ENCODE measurements at regions of chr5 and their contacts with region 1.

Region 1: DNA sequence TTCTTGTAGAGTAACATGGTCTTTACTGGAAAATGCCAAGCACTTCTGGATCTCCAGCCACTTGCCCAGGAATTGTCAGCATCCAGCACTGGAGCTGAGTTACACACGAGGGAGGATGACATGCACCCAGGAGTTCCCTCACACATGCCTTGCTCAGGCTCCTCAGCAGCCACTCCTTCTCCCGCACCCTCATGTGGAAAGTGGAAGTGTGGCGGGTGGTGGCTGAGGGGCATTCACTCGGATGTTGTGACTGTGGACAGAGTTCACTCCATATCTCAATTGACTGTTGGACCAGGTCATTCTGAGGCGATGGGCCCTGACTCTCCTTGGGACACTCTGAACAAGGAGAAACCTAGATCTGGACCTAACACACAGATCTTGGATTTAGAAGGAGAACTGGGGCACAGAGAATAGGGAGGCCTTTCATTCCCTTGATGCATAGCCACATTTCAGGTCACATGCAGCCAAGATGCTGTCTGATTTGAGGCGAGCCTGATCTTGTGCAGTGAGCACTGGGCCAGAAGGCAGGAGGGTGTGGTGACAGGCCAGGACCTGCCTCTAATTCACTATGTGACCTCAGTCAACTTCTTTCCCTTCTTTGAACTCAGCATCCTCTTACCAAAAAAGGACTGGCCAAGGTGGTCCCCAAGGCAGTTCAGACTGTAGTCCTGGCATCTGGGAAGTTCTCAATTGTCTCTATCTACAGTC is 62.1 kb downstream of the CYSTM1 start:
- DNase-seq: no peak
- H3K4me3 ChIP-seq: no peak overlapping the region
- H3K27ac ChIP-seq: no peak overlapping the region
- H3K4me1 ChIP-seq: peaks cover 19% of the 10 kb centered on the region
- H3K27me3 ChIP-seq: no peaks in the 10 kb centered on the region
- CTCF ChIP-seq: no peak

Region 2: DNA sequence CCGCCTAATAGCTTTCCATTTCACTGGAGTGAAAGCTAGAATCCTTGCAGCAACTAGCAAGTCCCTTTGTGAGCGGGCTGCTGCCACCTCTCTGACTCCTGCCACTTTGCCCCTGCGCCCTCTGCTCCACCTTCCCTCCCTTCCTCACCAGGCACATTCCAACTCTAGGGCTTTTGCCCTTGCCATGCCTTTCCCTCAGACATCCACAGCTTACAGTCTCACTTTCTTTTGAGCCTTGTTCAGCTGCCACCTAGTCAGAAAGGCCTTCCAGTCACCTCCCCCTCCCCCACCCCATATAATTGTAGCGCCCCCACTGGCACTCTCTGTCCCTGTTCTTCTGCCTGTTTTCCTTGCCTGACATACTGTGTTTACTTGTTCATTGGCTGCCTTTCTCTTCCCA is 31.1 kb before region 1 on chr5:
- CTCF ChIA-PET with region 1: interaction called, 10 read pairs
- POLR2A ChIA-PET with region 1: no interaction called
- intact Hi-C with region 1: no loop called
- DNase-seq: no peak
- H3K4me3 ChIP-seq: no peak overlapping the region
- H3K27ac ChIP-seq: no peak overlapping the region
- H3K4me1 ChIP-seq: peaks cover 7% of the 10 kb centered on the region
- H3K27me3 ChIP-seq: no peaks in the 10 kb centered on the region
- CTCF ChIP-seq: no peak

Region 3: GRCh38 chr5:140251527-140251973 is 14.5 kb after region 1 on chr5:
- CTCF ChIA-PET with region 1: no interaction called
- POLR2A ChIA-PET with region 1: no interaction called
- intact Hi-C with region 1: no loop called
- DNase-seq: peak; percentile 91
- H3K4me3 ChIP-seq: no peak overlapping the region
- H3K27ac ChIP-seq: peak overlapping the region; percentile 38
- H3K4me1 ChIP-seq: peaks cover 12% of the 10 kb centered on the region
- H3K27me3 ChIP-seq: no peaks in the 10 kb centered on the region
- CTCF ChIP-seq: no peak

Measured in A673 (cell line).